Dendritic cell treated with granulocyte-macrophage colony-stimulating factor and Interleukin-4, amounts not matched to agents 40 ng/mL and 50 ng/mL, for 4 days (primary cell): ENCODE measurements at regions of chr10 and their contacts with region 1.

Region 1: DNA sequence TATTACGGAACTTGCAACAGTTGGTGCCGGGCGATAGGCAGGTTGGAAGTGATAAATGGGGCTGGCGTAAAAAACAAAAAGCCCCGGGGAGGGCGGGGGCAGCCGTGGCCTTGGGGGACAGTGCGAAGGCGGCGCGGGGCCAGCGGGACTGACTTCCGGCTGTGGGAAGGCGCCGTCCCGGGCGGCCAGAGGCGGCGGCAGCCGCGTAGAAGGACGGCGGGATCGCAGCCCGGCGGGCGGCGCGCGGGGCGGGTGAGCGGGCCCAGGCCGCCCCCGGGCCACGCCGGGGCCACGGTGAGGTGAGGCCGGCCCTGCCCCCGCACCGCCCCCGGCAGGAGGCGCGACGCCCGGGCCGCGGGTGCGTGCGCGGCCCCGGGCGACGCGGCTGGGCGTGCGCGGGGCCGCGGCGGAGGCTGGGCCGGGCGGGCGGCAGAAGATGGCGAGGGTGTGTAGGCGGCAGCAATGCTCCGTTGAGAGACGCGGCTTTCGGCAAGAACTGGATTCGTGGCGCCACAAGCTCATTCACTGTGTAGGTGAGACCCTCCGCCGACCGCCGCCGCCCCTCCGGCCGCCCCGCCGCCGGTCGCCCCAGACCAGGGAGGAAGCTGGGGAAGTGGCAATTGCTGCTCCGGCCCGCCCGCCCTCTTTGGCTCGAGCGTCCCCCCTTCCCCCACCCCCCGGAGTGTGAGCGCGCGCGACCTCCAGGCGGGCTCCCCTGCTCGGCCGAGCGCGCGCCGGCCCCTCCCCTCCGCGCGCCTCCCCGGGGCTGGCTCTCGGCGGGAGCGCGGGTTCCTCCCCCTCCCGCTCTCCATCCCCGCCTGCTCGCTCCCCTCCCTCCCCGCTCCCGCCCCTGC is at the start of gene LCOR:
- H3K4me3 Mint-ChIP-seq: peak within 1 kb of the TSS; percentile 96
- H3K27ac Mint-ChIP-seq: peak within 1 kb of the TSS; percentile 96
- H3K4me1 Mint-ChIP-seq: peaks cover 44% of the 10 kb centered on the region
- H3K27me3 Mint-ChIP-seq: no peaks in the 10 kb centered on the region

Region 2: DNA sequence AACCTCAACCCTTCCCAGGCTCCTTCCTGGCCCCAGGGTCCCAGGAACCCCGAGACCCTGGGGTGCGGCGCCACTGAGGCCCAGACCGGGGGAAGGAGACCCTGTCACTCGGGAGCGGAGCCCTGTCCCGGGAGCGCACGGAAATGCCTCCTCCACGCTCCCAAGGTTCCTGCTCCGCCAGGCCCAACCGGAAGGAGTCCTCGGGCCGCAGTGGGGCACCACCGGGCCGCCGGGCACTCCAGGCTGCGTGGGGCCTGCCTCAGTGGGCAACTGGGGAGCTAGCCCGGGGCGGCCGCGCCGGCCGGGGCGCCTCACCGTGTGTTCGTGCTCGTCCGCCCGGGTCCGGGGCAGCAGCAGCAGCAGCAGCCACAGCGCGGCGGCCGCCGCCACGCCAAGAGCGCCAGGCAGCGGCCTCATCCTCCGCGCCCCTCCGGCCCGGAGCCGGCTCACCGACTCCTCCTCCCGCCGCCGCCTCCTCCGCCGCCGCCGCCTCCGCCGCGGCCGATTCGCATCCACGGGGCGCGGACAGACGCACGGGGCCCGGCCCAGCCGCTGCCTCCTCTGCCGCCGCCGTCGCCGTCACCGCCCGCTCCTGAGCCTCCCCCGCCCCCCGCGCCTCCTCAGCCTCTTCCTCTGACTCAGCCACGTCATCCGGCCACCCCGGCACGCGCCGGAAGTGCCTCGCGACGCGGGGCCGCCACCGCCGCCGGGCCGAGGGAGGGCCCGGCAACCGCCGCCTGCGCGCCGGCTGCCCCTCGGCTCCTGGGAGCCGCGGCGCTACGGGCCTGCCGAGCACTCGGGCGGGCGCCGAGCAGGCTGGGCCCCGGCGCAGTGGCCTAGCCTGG is 245.5 kb before region 1 on chr10 and contains the start of gene TM9SF3:
- intact Hi-C with region 1: loop called (anchors 5 kb)
- H3K4me3 Mint-ChIP-seq: peak within 1 kb of the TSS; percentile 82
- H3K27ac Mint-ChIP-seq: no peak within 1 kb of the TSS
- H3K4me1 Mint-ChIP-seq: peaks cover 39% of the 10 kb centered on the region
- H3K27me3 Mint-ChIP-seq: no peaks in the 10 kb centered on the region

Region 3: DNA sequence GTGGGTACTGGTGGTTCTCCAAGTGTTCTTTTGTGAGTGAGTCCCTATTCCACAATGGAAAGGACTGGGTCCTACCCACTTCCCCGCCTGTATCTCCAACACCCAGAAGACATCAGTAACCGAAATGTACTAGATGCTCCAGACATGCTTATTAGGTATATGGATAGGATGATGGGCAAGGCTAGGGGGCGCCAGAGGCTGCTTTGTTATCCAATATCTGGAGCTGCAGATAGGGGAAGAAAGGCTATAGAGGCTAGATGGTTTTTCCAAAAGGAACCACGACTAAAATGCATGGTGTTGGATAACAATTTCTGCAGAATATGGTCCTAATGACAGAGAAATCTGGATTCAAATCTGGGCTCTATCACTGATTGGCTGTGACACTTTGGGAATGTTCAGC is 189.1 kb before region 1 on chr10:
- intact Hi-C with region 1: loop called (anchors 1 kb)
- H3K4me3 Mint-ChIP-seq: no peak overlapping the region
- H3K27ac Mint-ChIP-seq: no peak overlapping the region
- H3K4me1 Mint-ChIP-seq: peaks cover 28% of the 10 kb centered on the region
- H3K27me3 Mint-ChIP-seq: no peaks in the 10 kb centered on the region

Region 4: DNA sequence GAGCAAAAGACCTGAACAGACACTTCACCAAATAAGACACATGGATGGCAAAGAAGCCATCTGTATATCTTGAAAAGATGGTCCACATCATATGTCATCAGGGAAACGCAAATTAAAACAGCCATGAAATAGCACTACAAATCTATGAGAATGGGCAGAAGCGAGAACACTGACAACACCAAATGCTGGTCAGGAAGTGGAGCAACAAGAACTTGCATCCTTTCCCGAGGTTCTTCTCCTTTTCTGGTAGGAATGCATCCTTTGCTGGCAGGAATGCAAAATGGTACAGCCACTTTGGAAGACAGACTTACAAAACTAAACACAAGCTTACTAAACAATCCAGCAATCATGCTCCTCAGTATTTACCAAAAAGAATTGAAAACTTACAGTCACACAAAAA is 171.8 kb before region 1 on chr10:
- intact Hi-C with region 1: no loop called
- H3K4me3 Mint-ChIP-seq: no peak overlapping the region
- H3K27ac Mint-ChIP-seq: no peak overlapping the region
- H3K4me1 Mint-ChIP-seq: peaks cover 58% of the 10 kb centered on the region
- H3K27me3 Mint-ChIP-seq: no peaks in the 10 kb centered on the region

Region 5: DNA sequence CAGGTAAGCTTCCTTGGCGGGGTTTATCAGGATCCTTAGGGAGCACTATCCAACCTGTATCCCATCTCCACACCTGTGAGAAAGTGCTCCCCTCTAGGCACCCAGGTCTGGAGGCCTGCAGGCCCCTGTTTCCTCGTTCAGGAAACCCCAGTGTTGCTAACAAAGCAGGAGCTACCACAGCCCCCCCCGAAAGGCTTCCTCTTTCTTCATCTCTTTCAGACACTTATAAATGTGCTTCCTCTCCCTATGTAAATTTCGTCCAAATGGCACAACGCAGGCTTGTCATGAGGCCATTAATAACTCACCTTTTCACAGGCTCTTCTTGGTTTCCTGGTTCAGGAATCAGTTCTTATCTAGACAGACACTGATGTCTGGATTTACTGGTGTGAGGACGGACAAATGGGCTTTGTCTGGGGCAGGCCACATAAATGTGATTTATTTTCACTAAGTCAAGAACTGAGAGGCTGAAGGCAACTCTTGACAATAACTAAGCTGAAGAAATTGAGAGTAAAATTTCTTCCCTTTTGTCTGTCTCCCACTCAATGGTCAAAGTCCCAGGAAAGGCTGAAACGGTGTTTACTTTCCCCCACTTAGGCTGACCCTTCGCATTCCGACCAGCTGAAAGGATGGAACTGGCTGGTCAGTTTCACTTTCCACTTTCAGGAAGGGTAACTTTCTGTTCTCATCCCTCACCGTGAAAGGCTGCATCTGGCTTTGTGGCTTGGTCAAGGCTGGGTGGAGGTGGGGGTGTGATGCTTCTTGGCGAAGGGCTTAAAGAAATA is 158.6 kb before region 1 on chr10:
- intact Hi-C with region 1: no loop called
- H3K4me3 Mint-ChIP-seq: peak overlapping the region; percentile 27
- H3K27ac Mint-ChIP-seq: peak overlapping the region; percentile 76
- H3K4me1 Mint-ChIP-seq: peaks cover 72% of the 10 kb centered on the region
- H3K27me3 Mint-ChIP-seq: no peaks in the 10 kb centered on the region

Region 6: DNA sequence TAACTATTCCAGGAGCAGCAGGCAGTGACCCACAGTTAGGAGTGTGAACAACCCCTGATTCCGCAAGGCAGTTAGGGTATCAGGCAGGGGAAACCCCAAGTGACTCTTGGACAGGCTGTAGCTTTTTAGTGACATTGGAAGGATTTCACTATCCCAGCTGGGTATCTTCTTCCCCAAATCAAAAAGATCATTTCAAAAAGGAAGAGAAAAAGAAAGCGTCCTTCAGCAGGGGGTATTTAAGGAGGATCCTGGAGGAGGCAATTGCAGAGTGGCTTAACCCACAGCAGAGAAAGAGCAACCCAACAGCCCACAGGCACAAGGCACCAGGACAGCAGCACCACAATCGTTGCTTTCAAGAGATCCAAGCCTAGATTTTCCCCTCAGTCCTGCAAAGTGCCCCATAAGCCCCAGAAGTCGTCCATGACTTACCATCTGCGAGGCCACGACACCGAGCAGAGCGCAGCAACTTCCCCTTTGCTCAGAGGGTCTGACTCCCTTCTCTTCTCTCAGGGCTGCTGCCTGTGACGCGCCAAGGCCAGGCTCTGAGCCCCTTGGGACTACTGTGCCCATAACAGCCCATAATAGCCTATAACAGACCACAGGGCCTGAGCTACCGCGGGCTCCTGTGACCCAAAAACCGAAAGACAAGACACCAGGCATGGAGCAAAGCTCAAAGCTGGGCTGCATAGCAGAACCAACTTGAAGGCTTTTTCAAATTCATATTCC is 131.6 kb before region 1 on chr10:
- intact Hi-C with region 1: loop called (anchors 10 kb)
- H3K4me3 Mint-ChIP-seq: peak overlapping the region; percentile 57
- H3K27ac Mint-ChIP-seq: peak overlapping the region; percentile 80
- H3K4me1 Mint-ChIP-seq: peaks cover 60% of the 10 kb centered on the region
- H3K27me3 Mint-ChIP-seq: no peaks in the 10 kb centered on the region

Region 7: GRCh38 chr10:96765406-96766240 is 66.5 kb before region 1 on chr10:
- intact Hi-C with region 1: loop called (anchors 5 kb)
- H3K4me3 Mint-ChIP-seq: no peak overlapping the region
- H3K27ac Mint-ChIP-seq: no peak overlapping the region
- H3K4me1 Mint-ChIP-seq: peaks cover 21% of the 10 kb centered on the region
- H3K27me3 Mint-ChIP-seq: no peaks in the 10 kb centered on the region